ENCODE measurements at regions of chr1 and their contacts with region 1.

Region 1: DNA sequence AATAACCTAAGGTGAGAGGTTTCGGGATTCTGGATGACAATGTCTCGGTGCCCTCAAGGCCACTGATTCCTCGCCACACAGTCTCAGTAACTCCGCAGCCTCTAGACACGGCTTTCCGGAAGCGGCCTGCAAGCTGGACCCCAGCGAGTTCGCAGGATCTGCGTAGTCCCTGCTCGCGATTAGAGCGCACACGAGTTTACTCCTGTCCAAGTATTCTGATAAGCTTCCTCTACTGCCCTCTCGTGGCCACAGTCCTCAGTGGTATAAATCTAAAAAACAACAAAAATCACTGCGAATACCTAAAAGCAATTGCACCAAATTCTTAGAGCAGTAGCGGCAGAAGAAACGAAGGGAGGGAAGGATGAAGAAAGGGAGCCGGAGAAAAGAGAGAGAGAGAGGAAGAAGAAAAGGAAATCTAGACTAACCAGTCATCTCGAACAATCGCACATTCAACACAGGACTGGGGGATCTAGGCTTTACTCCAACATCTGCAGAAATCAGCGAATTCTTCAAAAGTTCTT is 1.1 kb upstream of the PLXNA2 start:
- DNase-seq: peak; percentile 90 to 97 (median 92)
- H3K4me3 ChIP-seq: peak overlapping the region; percentile 33 to 76 (median 59)
- H3K27ac ChIP-seq: peak overlapping the region in 1 of 2 donors; percentile 80
- H3K4me1 ChIP-seq: peaks cover 0 to 22% (median under 1%) of the 10 kb centered on the region in 3 donors
- H3K27me3 ChIP-seq: no peaks in the 10 kb centered on the region
- CTCF ChIP-seq: peak; percentile 83

Region 2: DNA sequence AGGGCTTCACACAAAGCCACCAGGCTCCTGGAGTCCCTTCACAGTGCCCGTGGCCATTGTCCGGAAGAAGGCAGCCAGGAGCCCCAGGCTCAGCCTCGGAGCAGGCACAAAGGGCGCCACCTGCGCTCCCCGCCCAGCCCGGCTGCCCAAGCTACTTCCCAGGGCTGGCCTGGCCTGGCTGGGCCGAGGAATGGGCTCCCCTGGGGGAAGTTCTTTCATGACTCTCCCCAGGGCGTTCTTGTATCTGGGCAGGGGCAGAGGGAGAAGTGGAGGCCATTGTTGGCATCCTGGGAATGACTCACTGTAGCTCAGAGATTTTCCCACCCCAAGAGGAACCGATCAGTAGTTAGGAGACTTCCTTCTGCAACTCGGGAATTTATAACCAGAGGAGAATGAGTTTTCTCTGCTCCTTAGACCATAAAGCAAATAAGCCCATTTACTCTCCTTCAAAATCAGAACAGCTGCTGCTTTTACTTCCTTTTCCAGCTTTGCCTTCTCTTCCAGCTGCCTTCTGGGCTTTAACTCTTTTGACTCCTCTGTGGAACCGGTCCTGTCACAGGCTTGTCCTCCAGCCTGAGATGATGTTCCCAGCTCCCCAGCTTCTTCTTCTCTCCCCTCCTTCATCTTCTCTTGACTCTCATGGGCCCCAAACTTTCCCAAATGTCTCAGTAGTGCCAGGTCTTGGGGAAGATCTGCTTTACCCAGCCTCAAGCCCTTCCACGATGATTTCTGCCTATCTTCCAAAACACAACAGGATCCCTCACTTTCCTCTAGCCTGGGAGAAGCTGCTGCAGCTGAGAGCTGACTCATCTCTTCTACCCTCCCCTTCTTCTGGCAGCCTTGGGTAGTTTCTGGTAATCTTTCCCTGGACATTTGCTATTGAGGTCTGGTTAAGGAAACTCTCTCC is 215.6 kb before region 1 on chr1:
- intact Hi-C with region 1: loop called (anchors 10 kb)
- DNase-seq: peak in 3 of 5 donors; percentile 17 to 75 (median 69)
- H3K4me3 ChIP-seq: no peak overlapping the region
- H3K27ac ChIP-seq: peak overlapping the region in 1 of 2 donors; percentile 51
- H3K4me1 ChIP-seq: peaks cover 0 to 5% (median 2%) of the 10 kb centered on the region in 3 donors
- H3K27me3 ChIP-seq: no peaks in the 10 kb centered on the region
- CTCF ChIP-seq: no peak

Region 3: GRCh38 chr1:208170252-208170651 is 75.0 kb before region 1 on chr1:
- intact Hi-C with region 1: no loop called
- DNase-seq: peak in 1 of 5 donors; percentile 30
- H3K4me3 ChIP-seq: no peak overlapping the region
- H3K27ac ChIP-seq: no peak overlapping the region
- H3K4me1 ChIP-seq: peaks cover 0 to 11% (median 0%) of the 10 kb centered on the region in 3 donors
- H3K27me3 ChIP-seq: no peaks in the 10 kb centered on the region
- CTCF ChIP-seq: no peak

Region 4: DNA sequence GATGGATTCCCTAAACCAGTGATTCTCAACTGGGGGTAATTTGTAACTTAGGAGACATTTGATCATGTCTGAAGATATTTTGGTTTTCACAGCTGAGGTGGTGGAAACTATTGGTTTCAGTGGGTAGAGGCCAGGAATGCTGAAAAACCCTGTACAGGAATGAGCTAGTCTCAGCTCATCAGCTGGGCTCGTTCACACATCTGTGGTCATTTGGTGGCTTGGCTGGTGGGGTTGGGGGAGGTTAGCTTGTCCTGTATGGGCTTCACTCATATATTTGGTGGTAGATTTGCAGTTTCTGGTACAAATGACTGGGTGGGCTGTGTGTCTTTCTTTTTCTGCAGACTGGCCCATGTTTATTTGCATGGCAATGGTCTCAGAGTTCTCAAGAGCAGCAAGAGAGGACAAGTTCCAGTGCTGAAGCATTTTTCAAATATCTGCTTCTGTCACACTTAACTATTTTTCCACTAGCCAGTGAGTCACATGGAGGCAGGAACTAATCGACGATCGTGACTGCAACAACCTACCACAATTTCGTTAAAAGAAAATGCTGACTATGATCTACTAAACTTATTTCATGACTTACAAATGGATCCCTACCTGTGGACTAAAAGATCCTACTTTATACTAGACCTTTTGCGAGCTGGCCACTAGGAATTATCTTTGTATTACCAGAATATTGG is 320.7 kb after region 1 on chr1:
- intact Hi-C with region 1: no loop called
- DNase-seq: no peak
- H3K4me3 ChIP-seq: no peak overlapping the region
- H3K27ac ChIP-seq: no peak overlapping the region
- H3K4me1 ChIP-seq: no peaks in the 10 kb centered on the region
- H3K27me3 ChIP-seq: no peaks in the 10 kb centered on the region
- CTCF ChIP-seq: no peak